CD4-positive, alpha-beta memory T cell (primary cell): ENCODE measurements at regions of chr5 and their contacts with region 1.

Region 1: DNA sequence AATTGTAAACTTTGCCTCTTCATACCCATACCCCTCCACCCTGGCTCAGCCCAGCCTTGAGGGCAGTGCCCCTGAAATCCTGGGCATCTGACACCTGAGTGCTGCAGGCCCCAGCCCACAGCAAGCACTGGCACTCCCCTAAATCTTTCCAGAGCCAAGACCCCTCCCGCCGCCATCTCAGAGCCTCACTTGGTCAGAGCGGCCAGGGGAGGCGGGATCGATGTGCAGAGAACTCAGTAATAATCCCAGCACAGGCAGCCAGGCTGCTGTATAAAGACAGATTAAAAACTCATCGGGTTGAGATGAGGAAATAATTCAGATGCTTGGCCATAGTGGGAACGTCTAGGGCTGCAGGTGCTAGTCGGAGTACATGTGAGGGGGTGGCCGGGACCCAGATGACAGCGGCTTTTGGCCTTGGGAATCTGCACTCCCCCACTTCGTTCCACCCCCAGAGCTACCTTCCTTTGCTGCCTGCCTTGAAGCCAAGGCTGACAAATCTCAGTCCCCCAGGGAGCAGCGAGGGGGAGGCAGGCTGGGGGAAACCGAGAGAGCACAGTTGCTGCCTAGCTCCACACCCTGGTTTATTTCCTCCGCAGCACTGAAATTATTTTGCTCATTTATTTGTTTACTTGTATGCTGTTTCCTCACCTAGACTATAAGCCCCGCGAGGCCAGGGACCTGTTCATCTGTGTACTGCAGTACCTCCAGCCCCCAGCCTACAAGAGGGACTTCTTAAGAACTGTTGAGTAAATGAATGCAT is 19.5 kb upstream of the ARAP3 start:
- DNase-seq: no peak
- H3K4me3 ChIP-seq: peak overlapping the region in 1 of 2 donors; percentile 57
- H3K4me3 Mint-ChIP-seq: peak overlapping the region in 5 of 8 donors; percentile 78 to 91 (median 87)
- H3K27ac ChIP-seq: no peak overlapping the region
- H3K27ac Mint-ChIP-seq: peak overlapping the region in 5 of 7 donors; percentile 62 to 90 (median 83)
- H3K4me1 ChIP-seq: peaks cover 17% of the 10 kb centered on the region
- H3K4me1 Mint-ChIP-seq: peaks cover 9 to 29% (median 14%) of the 10 kb centered on the region in 4 donors
- H3K27me3 ChIP-seq: peaks cover 7% of the 10 kb centered on the region
- H3K27me3 Mint-ChIP-seq: peaks cover 3 to 13% of the 10 kb centered on the region in 2 donors

Region 2: DNA sequence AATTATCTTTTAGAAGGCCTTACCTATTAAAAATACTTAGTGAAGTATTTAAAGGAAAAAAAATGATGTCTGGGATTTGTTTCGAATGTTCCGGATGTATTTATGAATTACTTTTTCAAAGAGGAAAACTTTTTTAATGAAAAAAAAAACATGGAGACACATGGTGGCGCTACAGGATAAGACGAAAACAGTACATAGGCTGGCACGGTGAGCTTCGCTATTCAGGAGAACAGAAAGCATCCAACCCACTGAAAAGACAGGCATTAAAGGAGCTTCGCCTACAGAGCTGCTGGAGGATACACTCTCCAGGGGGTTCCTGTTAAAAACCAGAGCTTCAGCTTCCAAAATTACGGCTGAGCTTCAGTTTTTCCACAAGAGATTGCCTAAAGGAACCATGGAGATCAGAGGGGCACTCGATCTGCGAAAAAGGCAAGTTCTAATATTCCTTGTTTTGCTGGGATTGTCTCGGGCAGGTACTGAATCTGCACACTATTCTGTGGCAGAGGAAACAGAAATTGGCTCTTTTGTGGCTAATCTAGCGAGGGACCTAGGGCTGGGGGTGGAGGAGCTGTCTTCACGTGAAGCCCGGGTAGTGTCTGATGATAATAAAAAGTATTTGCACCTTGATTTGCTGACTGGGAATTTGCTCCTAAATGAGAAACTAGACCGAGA is 478.3 kb before region 1 on chr5 and contains the start of gene PCDHB14:
- CTCF ChIA-PET with region 1: no interaction called
- POLR2A ChIA-PET with region 1: no interaction called
- intact Hi-C with region 1: no loop called
- DNase-seq: peak in 1 of 5 donors; percentile 12
- H3K4me3 ChIP-seq: no peak within 1 kb of the TSS
- H3K4me3 Mint-ChIP-seq: peak within 1 kb of the TSS; percentile 8 to 68 (median 42)
- H3K27ac ChIP-seq: no peak within 1 kb of the TSS
- H3K27ac Mint-ChIP-seq: peak within 1 kb of the TSS in 1 of 7 donors; percentile 5
- H3K4me1 ChIP-seq: no peaks in the 10 kb centered on the region
- H3K4me1 Mint-ChIP-seq: peaks cover 0 to 6% (median 2%) of the 10 kb centered on the region in 4 donors
- H3K27me3 ChIP-seq: peaks cover 12% of the 10 kb centered on the region
- H3K27me3 Mint-ChIP-seq: peaks cover 30 to 47% of the 10 kb centered on the region in 2 donors
- total RNA-seq, gene PCDHB14: 0.14 to 0.15 TPM

Region 3: DNA sequence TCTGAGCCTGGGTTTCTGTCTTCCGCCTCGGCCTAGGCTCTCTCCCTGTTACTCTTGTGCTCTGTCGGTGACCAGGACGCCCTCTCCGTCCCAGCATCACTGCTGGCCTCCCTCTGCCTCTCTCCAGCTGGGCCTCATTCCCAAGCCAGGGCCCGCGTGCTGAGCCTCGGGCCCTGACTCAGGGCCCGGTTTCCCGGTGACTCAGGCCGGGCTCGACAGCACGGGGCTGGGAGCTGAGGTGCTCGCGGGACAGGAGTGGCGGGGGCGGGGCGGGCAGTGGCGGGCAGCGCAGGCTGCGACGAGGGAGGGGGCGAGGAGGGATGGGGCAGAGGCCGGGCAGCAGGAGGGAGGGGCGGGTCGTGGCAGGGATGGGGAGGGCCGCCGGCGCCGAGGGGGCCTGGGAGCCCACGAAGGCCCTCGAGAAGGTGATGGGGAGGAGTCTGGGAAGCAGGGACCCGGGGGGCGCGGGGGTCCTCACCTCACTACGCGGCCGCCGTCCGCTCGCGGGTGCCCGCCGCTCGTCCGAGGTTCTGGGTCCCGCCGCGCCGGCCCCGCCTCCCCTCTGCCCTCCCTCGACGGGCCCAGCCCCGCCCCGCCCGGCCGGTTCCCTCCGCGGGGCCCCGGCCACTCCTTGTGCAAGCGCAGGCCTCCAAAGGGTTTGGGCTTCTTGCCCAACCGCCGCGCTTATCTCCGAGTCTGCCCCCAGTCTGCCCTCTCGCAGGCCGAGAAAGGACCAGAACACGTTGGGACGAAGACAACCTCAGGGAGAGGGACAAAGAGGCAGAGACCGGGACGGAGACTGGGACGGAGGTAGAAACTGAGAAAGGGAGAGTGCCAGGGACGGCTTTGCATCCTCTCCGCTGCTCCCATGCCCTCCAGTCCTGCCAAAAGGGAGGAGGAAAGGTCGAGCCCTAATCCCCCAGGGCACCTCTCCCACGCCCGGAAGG is 19.6 kb before region 1 on chr5 and contains the start of gene ARAP3:
- CTCF ChIA-PET with region 1: interaction called, 22 read pairs
- POLR2A ChIA-PET with region 1: interaction called, 12 read pairs
- intact Hi-C with region 1: no loop called
- DNase-seq: peak in 2 of 5 donors; percentile 24 to 47
- H3K4me3 ChIP-seq: peak within 1 kb of the TSS in 1 of 2 donors; percentile 17
- H3K4me3 Mint-ChIP-seq: peak within 1 kb of the TSS; percentile 78 to 86 (median 83)
- H3K27ac ChIP-seq: no peak within 1 kb of the TSS
- H3K27ac Mint-ChIP-seq: peak within 1 kb of the TSS; percentile 47 to 91 (median 77)
- H3K4me1 ChIP-seq: peaks cover 33% of the 10 kb centered on the region
- H3K4me1 Mint-ChIP-seq: peaks cover 14 to 36% (median 26%) of the 10 kb centered on the region in 4 donors
- H3K27me3 ChIP-seq: no peaks in the 10 kb centered on the region
- H3K27me3 Mint-ChIP-seq: peaks cover 0 to 2% of the 10 kb centered on the region in 2 donors
- total RNA-seq, gene ARAP3: 14.7 to 16.4 TPM

Region 4: DNA sequence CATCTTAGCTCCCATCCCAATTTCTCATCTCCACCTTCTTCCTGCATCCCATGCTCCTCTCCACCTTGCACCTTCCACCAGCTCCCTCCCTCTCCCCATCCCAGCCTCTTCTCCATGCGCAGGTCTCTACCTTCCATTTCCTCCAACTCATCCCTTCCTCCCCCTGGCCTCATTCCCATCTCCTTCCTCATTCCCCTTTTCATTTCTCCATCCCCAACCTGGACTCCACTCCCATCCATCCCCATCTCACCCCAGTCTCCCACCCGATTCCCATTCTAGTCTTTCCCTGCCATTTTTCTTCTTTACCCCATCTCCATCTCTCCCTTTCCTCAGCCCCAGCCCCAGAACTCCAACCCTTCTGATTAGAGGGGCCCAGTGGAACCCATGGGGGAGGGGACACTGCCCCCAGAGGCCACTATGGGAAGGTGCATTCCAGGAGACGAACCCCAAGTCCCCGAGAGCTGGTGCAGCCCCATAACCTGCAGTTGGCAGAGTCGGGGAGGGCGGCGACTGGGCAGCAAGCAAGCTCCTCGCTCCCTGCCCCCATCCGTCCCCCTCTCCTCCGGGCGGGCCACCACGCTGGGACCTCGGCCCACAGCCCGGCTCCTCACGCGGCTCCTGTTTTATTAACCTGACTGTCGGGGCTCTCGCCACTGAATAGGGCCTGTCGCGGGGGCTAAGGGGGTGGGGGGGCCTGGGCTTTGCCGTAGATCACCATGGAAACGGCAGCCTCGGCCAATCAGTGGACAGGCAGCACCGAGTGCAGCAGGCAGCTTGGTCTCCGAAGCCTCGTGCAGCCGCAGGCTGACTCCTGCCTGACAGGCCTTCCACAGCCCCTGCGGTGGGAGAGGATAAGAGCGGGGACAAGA is 110.0 kb after region 1 on chr5:
- CTCF ChIA-PET with region 1: interaction called, 81 read pairs
- POLR2A ChIA-PET with region 1: no interaction called
- intact Hi-C with region 1: loop called (anchors 1 kb)
- DNase-seq: peak in 4 of 5 donors; percentile 4 to 45 (median 17)
- H3K4me3 ChIP-seq: no peak overlapping the region
- H3K4me3 Mint-ChIP-seq: peak overlapping the region in 1 of 8 donors; percentile 26
- H3K27ac ChIP-seq: no peak overlapping the region
- H3K27ac Mint-ChIP-seq: no peak overlapping the region
- H3K4me1 ChIP-seq: no peaks in the 10 kb centered on the region
- H3K4me1 Mint-ChIP-seq: peaks cover 0 to 3% (median under 1%) of the 10 kb centered on the region in 4 donors
- H3K27me3 ChIP-seq: peaks cover 15% of the 10 kb centered on the region
- H3K27me3 Mint-ChIP-seq: peaks cover 30 to 64% of the 10 kb centered on the region in 2 donors

Region 5: DNA sequence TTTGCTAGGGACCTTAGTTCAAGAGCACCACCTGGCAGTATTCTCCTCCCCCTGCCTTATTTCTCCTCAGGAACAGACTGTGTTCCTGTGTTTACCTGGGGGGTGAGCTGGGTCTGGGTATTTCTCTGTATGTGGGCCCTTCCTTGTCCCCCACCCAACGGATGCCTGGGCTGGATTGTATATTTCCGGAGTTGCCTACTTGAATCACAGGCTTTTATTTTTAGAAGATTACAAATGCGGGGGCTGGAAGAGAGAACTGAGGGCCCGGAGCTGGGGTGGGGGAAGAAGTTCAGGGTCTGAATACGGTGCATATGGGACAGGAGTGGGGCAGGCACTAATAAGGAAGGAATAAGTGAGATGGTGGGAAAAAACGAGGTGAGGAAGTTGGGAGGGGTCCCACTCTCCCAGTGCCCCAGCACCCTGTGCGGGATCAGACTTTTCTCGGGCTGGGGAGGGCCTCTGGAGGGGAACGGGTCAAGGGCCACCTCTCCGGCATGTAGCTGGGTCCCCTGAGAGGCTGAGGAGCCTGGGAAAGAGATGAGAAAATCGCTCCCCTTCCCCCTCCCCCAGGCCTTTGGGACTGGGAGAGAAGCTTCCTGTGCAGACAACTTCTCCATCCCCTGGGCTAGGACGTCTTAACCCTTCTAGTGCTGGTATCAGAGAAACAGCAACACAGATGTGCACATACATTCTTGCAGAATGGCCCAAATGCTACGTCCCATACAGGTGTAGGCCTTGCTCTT is 134.6 kb after region 1 on chr5:
- CTCF ChIA-PET with region 1: interaction called, 18 read pairs
- POLR2A ChIA-PET with region 1: no interaction called
- intact Hi-C with region 1: no loop called
- DNase-seq: no peak
- H3K4me3 ChIP-seq: no peak overlapping the region
- H3K4me3 Mint-ChIP-seq: no peak overlapping the region
- H3K27ac ChIP-seq: no peak overlapping the region
- H3K27ac Mint-ChIP-seq: no peak overlapping the region
- H3K4me1 ChIP-seq: peaks cover 3% of the 10 kb centered on the region
- H3K4me1 Mint-ChIP-seq: peaks cover 0 to 4% (median 1%) of the 10 kb centered on the region in 4 donors
- H3K27me3 ChIP-seq: peaks cover 6% of the 10 kb centered on the region
- H3K27me3 Mint-ChIP-seq: peaks cover 8 to 28% of the 10 kb centered on the region in 2 donors

Region 6: GRCh38 chr5:142087920-142088679 is 386.6 kb after region 1 on chr5:
- CTCF ChIA-PET with region 1: no interaction called
- POLR2A ChIA-PET with region 1: no interaction called
- intact Hi-C with region 1: no loop called
- DNase-seq: peak; percentile 41 to 73 (median 53)
- H3K4me3 ChIP-seq: peak overlapping the region; percentile 3 to 23
- H3K4me3 Mint-ChIP-seq: peak overlapping the region; percentile 71 to 86 (median 79)
- H3K27ac ChIP-seq: peak overlapping the region; percentile 60
- H3K27ac Mint-ChIP-seq: peak overlapping the region; percentile 84 to 97 (median 95)
- H3K4me1 ChIP-seq: peaks cover 28% of the 10 kb centered on the region
- H3K4me1 Mint-ChIP-seq: peaks cover 20 to 31% (median 25%) of the 10 kb centered on the region in 4 donors
- H3K27me3 ChIP-seq: no peaks in the 10 kb centered on the region
- H3K27me3 Mint-ChIP-seq: no peaks in the 10 kb centered on the region